ENCODE measurements at regions of chr20 and their contacts with region 1.

Region 1: DNA sequence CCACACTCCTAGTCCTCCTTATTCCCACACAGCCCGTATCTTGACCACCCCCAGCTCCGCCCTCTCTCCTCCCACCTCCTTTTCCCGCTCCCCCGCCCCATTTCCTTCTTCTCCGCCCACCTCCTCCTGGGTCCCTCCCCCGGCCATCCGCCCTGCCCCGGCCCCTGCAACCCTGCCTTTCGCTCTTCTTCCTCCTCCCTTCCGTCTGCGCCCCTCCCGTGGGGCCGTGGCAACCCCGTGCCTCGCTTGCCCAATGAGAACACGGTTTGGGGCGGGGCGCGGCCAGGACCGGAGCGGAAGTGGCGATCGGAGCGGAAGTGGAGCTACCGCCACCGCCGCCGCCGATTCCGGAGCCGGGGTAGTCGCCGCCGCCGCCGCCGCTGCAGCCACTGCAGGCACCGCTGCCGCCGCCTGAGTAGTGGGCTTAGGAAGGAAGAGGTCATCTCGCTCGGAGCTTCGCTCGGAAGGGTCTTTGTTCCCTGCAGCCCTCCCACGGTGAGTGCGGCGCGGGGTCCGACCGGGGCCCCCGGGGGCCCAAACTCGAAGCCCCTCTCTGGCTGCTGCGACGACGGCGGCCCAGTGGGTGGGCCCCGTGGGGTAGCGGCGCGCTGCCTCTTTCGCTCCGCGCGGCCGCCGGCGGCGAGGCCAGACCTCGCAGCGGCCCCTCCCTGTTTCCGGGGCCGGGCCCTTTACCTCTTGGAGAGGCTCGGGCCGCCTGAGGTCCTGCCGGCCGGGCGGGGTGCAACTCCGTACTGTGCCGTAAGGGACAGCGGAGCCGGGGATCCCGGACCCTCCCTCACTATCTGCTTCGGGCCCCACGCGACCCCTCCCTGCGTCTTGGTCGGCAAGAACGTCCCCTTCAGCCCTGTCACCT is at the start of gene YWHAB:
- DNase-seq: peak; percentile 93 to 99 (median 98)
- ATAC-seq: peak; percentile 91
- H3K4me3 ChIP-seq: peak within 1 kb of the TSS; percentile 91
- H3K4me3 Mint-ChIP-seq: peak within 1 kb of the TSS; percentile 98
- H3K27ac ChIP-seq: peak within 1 kb of the TSS; percentile 89 to 93
- H3K27ac Mint-ChIP-seq: peak within 1 kb of the TSS; percentile 89
- H3K4me1 ChIP-seq: peaks cover 38% of the 10 kb centered on the region
- H3K4me1 Mint-ChIP-seq: peaks cover 80% of the 10 kb centered on the region
- H3K27me3 ChIP-seq: no peaks in the 10 kb centered on the region
- H3K27me3 Mint-ChIP-seq: no peaks in the 10 kb centered on the region
- CTCF ChIP-seq: no peak
- total RNA-seq, gene YWHAB: 163 to 167 TPM

Region 2: GRCh38 chr20:43456809-43457639 is 1428.6 kb before region 1 on chr20:
- CTCF ChIA-PET with region 1: no interaction called
- POLR2A ChIA-PET with region 1: no interaction called
- intact Hi-C with region 1: loop called in 1 of 2 experiments (anchors 10 kb)
- DNase-seq: peak; percentile 70 to 94 (median 80)
- ATAC-seq: peak; percentile 78
- H3K4me3 ChIP-seq: peak overlapping the region; percentile 86
- H3K4me3 Mint-ChIP-seq: peak overlapping the region; percentile 94
- H3K27ac ChIP-seq: peak overlapping the region; percentile 99 to 100
- H3K27ac Mint-ChIP-seq: peak overlapping the region; percentile 95
- H3K4me1 ChIP-seq: peaks cover 18% of the 10 kb centered on the region
- H3K4me1 Mint-ChIP-seq: peaks cover 37% of the 10 kb centered on the region
- H3K27me3 ChIP-seq: peaks cover 0 to 8% of the 10 kb centered on the region in 2 experiments
- H3K27me3 Mint-ChIP-seq: peaks cover 13% of the 10 kb centered on the region
- CTCF ChIP-seq: no peak

Region 3: GRCh38 chr20:44475694-44476560 is 409.7 kb before region 1 on chr20 and contains the start of gene TTPAL:
- CTCF ChIA-PET with region 1: no interaction called
- POLR2A ChIA-PET with region 1: interaction called, 3 read pairs
- intact Hi-C with region 1: loop called in 1 of 2 experiments (anchors 10 kb)
- DNase-seq: peak; percentile 75 to 95 (median 86)
- ATAC-seq: peak; percentile 95
- H3K4me3 ChIP-seq: peak within 1 kb of the TSS; percentile 90
- H3K4me3 Mint-ChIP-seq: peak within 1 kb of the TSS; percentile 95
- H3K27ac ChIP-seq: peak within 1 kb of the TSS; percentile 89 to 98
- H3K27ac Mint-ChIP-seq: peak within 1 kb of the TSS; percentile 96
- H3K4me1 ChIP-seq: peaks cover 18% of the 10 kb centered on the region
- H3K4me1 Mint-ChIP-seq: peaks cover 26% of the 10 kb centered on the region
- H3K27me3 ChIP-seq: no peaks in the 10 kb centered on the region
- H3K27me3 Mint-ChIP-seq: no peaks in the 10 kb centered on the region
- CTCF ChIP-seq: no peak
- total RNA-seq, gene TTPAL: 9.0 to 9.9 TPM

Region 4: DNA sequence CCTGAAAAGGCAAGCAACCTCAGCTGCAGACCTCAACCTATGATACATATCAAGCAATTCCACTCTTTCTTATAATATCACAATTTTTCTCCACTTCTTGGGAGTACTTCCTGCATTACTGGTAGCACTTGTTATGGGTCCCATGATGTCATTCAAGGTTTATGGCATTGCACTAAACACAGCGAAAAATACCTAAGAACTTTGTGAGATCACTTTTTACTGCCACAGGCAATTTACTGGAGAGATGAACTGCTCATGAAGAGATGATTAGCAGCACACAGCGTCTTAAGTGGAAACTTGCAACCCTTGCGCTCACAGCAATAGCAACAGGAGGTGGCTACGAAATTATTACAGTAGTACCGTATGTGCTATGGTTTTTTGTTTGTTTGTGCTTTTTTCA is 55.9 kb before region 1 on chr20:
- CTCF ChIA-PET with region 1: no interaction called
- POLR2A ChIA-PET with region 1: no interaction called
- intact Hi-C with region 1: no loop called
- DNase-seq: no peak
- ATAC-seq: no peak
- H3K4me3 ChIP-seq: no peak overlapping the region
- H3K4me3 Mint-ChIP-seq: no peak overlapping the region
- H3K27ac ChIP-seq: no peak overlapping the region
- H3K27ac Mint-ChIP-seq: no peak overlapping the region
- H3K4me1 ChIP-seq: no peaks in the 10 kb centered on the region
- H3K4me1 Mint-ChIP-seq: no peaks in the 10 kb centered on the region
- H3K27me3 ChIP-seq: peaks cover 12 to 17% of the 10 kb centered on the region in 2 experiments
- H3K27me3 Mint-ChIP-seq: peaks cover 37% of the 10 kb centered on the region
- CTCF ChIP-seq: no peak

Region 5: GRCh38 chr20:44896583-44896982 is 11.0 kb after region 1 on chr20:
- CTCF ChIA-PET with region 1: interaction called, 6 read pairs
- POLR2A ChIA-PET with region 1: interaction called, 12 read pairs
- intact Hi-C with region 1: no loop called
- DNase-seq: peak in 2 of 14 experiments; percentile 35 to 43
- ATAC-seq: no peak
- H3K4me3 ChIP-seq: no peak overlapping the region
- H3K4me3 Mint-ChIP-seq: peak overlapping the region; percentile 12
- H3K27ac ChIP-seq: peak overlapping the region in 1 of 2 donors; percentile 35
- H3K27ac Mint-ChIP-seq: peak overlapping the region; percentile 50
- H3K4me1 ChIP-seq: peaks cover 57% of the 10 kb centered on the region
- H3K4me1 Mint-ChIP-seq: peaks cover 86% of the 10 kb centered on the region
- H3K27me3 ChIP-seq: no peaks in the 10 kb centered on the region
- H3K27me3 Mint-ChIP-seq: no peaks in the 10 kb centered on the region
- CTCF ChIP-seq: no peak

Region 6: DNA sequence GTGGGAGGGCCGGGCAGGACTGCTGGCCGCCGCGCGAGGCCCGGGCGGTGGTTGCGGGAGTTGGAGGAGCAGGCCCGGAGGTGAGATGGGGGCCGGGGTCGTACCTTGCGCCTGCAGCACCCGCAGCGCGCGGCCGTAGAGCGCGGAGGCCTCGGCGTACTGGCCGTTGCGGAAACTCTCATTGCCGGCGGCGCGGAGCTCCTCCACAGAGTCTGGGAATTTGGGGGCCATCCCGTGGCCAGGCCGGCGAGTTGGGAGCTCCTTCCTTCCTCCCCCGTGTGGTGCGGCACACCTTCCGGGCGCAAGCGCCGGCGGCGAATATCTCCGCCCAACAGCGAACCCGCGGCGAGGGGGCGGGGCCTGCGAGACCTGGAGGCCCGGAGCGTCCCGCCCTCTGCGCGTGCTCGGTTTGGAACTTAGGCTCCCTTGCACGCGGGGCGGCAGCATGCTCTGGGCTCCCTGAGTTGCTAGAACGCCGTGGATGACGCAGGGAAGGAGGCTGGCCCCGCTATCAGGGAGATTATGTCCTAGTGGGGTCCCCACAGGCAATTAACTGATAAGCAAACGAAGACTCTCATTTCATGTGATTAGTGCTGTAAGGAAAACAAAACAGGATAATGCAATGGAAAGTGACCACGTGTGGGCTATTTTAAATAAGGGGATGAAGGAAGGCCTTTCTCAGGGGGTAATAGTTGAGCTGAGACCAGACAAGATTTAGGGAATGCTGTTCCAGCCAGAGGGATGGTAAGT is 74.6 kb after region 1 on chr20 and contains the start of gene TOMM34:
- CTCF ChIA-PET with region 1: no interaction called
- POLR2A ChIA-PET with region 1: interaction called, 12 read pairs
- intact Hi-C with region 1: loop called in 1 of 2 experiments (anchors 2 kb)
- DNase-seq: peak; percentile 89 to 98 (median 94)
- ATAC-seq: peak; percentile 97
- H3K4me3 ChIP-seq: peak within 1 kb of the TSS; percentile 78
- H3K4me3 Mint-ChIP-seq: peak within 1 kb of the TSS; percentile 98
- H3K27ac ChIP-seq: peak within 1 kb of the TSS; percentile 41 to 66
- H3K27ac Mint-ChIP-seq: peak within 1 kb of the TSS; percentile 81
- H3K4me1 ChIP-seq: peaks cover 35% of the 10 kb centered on the region
- H3K4me1 Mint-ChIP-seq: peaks cover 52% of the 10 kb centered on the region
- H3K27me3 ChIP-seq: no peaks in the 10 kb centered on the region
- H3K27me3 Mint-ChIP-seq: no peaks in the 10 kb centered on the region
- CTCF ChIP-seq: no peak
- total RNA-seq, gene TOMM34: 5.6 to 5.9 TPM

Region 7: DNA sequence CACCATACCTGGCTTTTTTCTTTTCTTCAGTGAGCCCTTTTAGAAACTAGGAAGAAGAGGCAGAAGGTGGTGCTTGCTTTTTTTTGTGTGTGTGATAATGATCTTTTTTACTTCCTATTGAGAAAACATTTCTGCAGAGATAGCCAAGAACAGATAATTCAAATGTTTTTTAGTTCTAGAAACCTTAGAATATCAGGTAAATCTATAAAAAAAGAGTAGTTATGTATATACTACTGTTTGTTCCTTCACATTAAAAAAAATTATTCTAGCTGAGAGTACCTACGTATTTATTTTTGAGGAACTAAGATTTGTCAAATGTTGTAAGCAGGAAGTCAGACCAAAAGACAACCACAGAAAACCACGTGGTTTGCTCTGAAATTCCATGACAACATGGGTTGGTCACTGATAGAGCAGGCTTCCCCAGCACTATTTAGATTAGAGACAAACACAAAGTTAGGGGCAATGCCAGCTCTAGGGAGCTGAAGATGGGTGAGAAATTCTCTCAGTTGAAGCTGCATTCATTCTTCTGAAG is 93.5 kb after region 1 on chr20:
- CTCF ChIA-PET with region 1: interaction called, 3 read pairs
- POLR2A ChIA-PET with region 1: interaction called, 11 read pairs
- intact Hi-C with region 1: no loop called
- DNase-seq: peak in 13 of 14 experiments; percentile 35 to 94 (median 49)
- ATAC-seq: peak; percentile 85
- H3K4me3 ChIP-seq: peak overlapping the region; percentile 34
- H3K4me3 Mint-ChIP-seq: peak overlapping the region; percentile 83
- H3K27ac ChIP-seq: peak overlapping the region; percentile 90 to 95
- H3K27ac Mint-ChIP-seq: peak overlapping the region; percentile 96
- H3K4me1 ChIP-seq: peaks cover 56% of the 10 kb centered on the region
- H3K4me1 Mint-ChIP-seq: peaks cover 93% of the 10 kb centered on the region
- H3K27me3 ChIP-seq: no peaks in the 10 kb centered on the region
- H3K27me3 Mint-ChIP-seq: no peaks in the 10 kb centered on the region
- CTCF ChIP-seq: no peak

Region 8: DNA sequence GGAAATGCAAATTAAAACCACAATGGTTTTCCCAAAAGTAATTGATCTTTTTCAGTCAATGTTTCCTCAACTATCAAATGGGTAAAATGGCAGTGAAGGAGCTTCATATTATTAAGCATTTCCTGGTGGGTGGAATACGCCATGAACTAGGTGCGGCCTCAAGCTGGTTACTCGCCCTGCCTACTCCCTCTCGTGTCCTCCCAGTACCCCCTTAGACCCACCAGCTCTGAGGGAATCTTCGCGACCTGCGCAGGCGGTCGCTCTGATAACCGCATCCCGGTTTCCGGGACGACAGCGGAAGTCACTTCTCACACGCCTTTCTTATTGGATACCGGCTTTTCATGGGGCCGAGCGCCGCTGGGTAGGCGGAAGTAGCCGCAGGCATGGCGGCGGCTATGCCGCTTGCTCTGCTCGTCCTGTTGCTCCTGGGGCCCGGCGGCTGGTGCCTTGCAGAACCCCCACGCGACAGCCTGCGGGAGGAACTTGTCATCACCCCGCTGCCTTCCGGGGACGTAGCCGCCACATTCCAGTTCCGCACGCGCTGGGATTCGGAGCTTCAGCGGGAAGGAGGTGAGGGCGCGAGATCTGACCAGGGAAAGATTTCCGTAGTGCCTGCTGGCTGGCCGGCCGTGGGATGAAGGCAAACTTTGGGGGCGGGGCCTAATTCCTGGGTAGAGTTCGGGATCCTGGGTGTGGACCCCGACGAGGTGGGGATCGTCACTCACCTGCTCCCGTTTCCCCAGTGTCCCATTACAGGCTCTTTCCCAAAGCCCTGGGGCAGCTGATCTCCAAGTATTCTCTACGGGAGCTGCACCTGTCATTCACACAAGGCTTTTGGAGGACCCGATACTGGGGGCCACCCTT is 530.4 kb after region 1 on chr20 and contains the start of gene PIGT:
- CTCF ChIA-PET with region 1: no interaction called
- POLR2A ChIA-PET with region 1: interaction called, 3 read pairs
- intact Hi-C with region 1: loop called in 1 of 2 experiments (anchors 10 kb)
- DNase-seq: peak; percentile 75 to 97 (median 86)
- ATAC-seq: peak; percentile 95
- H3K4me3 ChIP-seq: peak within 1 kb of the TSS; percentile 98
- H3K4me3 Mint-ChIP-seq: peak within 1 kb of the TSS; percentile 95
- H3K27ac ChIP-seq: peak within 1 kb of the TSS; percentile 81 to 88
- H3K27ac Mint-ChIP-seq: peak within 1 kb of the TSS; percentile 92
- H3K4me1 ChIP-seq: peaks cover 31% of the 10 kb centered on the region
- H3K4me1 Mint-ChIP-seq: peaks cover 49% of the 10 kb centered on the region
- H3K27me3 ChIP-seq: no peaks in the 10 kb centered on the region
- H3K27me3 Mint-ChIP-seq: no peaks in the 10 kb centered on the region
- CTCF ChIP-seq: no peak
- total RNA-seq, gene PIGT: 157 to 163 TPM